Astrocyte of the cerebellum (primary cell): ENCODE measurements at regions of chr15 and their contacts with region 1.

Region 1: DNA sequence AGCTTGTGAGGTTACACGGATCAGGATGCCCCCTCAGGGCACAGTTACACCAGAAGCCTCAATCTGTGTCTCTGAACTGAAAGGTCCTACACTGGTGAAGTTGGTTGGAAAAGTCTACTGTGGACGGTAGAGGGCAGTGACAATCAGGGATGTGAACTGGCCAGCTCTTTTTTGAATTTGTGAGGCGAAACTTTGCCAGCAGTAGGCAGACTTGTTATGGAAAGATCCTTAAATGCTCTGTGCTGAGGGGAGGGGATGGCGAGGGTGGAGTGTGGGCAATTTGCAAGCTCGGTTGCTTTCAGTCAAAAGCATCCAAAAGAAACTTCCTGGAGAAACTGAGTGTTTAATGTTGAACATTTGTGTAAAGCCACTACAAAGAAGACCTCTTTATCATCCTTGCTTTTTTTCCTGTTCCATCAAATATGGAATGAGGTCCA is 127.4 kb upstream of the ABHD17C start:
- DNase-seq: peak; percentile 93
- H3K4me3 ChIP-seq: no peak overlapping the region
- CTCF ChIP-seq: peak; percentile 93

Region 2: DNA sequence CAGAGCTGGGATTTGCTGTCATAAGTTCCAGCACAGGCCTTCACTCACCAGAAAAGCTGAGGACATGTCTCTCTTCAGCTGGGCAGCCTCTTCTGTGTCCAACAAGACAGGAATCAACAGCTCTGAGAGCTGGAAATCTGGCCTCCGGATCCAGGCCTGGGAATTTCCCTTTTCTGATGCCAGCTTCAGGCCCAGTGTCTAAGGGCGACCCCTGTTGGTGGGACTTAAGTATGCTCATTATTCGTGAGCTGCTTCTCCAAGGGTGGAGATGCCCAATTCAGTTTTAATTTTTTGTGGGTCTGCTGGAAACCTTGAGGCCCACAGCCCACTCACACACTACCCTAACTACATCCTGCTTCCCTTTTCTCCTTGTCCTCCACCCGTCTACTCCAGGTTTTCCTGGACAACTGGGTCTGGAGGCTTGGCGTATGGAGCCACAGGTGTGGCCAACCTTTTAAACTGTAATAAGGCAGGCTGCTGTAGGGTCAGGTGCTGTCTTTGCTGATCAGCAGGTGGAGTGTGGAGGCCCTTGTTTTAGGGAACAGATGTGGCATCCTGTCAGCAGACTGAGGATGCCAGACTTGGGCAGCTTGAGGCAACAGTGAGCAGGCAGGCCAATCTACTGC is 208.8 kb after region 1 on chr15:
- in situ Hi-C with region 1: loop called (anchors 25 kb)
- DNase-seq: peak; percentile 81
- H3K4me3 ChIP-seq: no peak overlapping the region
- CTCF ChIP-seq: peak; percentile 81